A549 (cell line): ENCODE measurements at regions of chr12 and their contacts with region 1.

Region 1: DNA sequence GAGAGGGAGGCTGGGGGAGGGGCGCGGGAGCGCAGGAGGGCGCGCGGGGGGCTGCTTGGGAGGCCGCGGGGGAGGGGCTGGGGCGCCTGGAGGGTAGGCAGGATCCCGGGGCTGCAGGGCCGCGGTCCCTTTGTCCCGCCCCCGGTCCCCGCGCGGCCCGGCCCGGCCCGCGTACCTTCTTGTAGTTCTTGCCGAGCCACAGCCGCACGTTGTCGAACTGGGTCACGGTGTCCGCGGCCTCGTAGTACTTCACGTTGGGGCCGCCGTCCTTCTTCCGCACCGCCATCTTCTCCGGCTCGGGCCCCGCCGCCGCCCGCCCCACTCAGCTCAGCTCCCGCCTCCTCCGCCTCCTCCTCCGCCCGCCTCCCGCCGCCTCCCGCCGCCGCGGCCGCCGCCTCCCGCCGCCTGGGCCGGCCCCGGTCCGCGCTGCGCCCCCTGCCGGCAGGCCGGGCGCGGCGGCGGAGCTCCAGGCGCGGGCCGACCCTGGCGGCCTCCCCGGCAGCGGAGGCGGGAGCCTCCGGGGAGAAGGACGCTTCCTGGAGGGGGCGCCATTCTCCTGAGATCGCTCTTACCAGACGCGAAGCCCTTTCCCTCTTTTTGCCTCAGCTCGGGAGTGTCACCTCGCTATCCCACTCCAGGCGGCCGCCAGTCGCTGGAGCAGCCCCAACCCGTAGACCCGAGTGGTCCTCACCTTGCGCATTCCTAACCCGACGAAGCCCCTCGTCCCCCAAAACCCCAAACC is at the start of gene SMARCC2:
- DNase-seq: peak; percentile 91 to 92
- ATAC-seq: peak; percentile 83 to 91
- H3K4me3 ChIP-seq: peak within 1 kb of the TSS; percentile 81
- H3K27ac ChIP-seq: peak within 1 kb of the TSS; percentile 93 to 99
- H3K4me1 ChIP-seq: peaks cover 13% of the 10 kb centered on the region
- CTCF ChIP-seq: peak; percentile 99
- EP300 ChIP-seq: no peak
- POLR2A ChIP-seq: peak; percentile 63
- RAD21 ChIP-seq: peak; percentile 39 to 41; a peak in 3 of 5 replicates
- polyA plus RNA-seq, gene SMARCC2: 83.9 and 109 TPM in 2 replicates

Region 2: DNA sequence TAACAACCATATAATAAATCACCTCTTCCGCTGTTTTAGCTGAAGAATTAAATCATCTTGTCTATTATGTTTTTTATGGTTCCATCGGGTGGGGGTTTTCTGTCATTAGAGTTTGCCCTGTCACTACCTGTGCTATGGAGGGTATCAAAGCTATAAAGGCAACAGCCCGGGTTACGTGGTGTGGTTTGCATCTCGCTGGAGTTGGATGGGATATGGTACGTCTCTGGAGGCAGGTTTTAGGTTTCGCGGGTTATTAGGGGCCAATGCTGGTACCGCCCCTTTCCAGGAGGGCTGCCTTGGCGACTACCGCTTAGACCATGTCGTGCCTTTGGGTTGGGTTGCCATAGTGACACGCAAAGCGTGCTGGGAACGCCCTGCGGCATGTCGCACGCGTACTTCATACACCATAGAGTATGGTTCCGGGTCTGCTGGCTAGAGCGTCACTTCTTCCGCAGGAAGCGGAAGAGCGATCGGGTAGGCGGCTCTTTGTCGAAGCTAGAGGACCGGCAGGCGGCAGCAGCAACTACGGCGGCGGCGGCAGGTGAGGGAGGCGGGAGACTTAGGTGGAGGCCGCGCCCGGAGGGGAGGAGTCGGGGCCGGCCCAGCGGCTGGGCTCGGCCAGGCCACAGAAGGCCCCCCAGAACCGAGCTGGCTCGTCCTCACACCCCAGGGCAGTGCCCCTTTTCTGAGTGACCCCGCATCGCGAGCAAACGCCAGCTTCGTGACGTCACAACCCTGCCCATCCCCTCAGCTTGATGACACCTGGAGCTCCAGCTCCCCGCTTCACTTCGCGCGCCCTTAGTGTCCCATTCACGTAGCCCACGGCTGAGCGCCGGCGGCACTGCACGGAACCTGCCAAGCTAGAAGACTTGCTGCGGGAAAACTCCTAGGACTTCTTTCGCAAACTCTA is 71.3 kb before region 1 on chr12 and contains the start of gene ZC3H10:
- CTCF ChIA-PET with region 1: interaction called, 204 read pairs
- POLR2A ChIA-PET with region 1: interaction called, 36 read pairs
- DNase-seq: peak; percentile 97 to 100
- ATAC-seq: peak; percentile 74 to 82
- H3K4me3 ChIP-seq: peak within 1 kb of the TSS; percentile 71
- H3K27ac ChIP-seq: peak within 1 kb of the TSS; percentile 91 to 96
- H3K4me1 ChIP-seq: peaks cover 20% of the 10 kb centered on the region
- CTCF ChIP-seq: peak; percentile 36
- EP300 ChIP-seq: no peak
- POLR2A ChIP-seq: peak; percentile 96
- RAD21 ChIP-seq: 0 out of 5 replicates have a peak, but pooled peaks of 1 of the 2 experiments have one; percentile 10
- polyA plus RNA-seq, gene ZC3H10: 2.1 and 2.7 TPM in 2 replicates

Region 3: DNA sequence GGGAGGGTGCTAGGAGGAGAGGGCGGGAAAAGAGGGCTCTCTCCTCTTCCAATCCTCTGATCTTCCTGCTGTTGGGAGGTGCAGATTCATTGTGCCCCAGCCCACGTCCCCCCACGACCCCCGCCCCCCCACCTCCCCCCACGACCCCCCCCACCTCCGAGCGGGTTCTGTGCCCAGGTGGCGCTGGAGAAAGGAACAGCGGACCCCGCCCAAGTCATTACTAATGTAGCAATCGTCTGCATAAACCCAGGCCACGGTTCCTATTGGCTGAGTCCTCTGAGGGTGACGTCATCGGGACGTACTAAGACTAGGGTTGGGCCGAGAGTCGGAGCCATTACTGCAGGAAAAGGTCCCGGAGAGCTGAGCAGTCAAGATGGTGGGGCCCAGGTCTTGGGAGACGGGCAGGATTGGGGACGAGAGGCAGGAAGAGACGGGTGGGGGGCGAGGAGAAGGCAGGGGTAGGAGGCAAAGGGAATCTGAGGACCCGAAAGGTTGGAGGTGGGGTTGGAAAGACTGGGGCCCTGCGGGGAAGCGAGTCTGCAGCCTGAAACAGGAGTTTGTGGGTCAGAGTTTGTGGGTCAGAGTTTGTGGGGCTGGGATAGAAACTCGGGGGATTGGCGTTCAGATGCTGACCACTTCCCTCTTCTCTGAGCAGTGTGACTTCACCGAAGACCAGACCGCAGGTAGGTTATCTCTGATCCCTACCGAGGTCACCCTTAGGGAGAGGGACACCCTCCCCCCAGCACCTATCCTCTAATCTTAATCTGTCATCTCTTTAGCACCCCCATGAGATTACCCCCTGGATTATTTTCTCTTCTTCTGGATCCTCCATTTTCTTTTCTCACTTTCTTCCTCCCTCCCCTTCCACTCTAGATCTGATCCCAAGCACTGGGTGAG is 31.1 kb before region 1 on chr12 and contains the start of gene MYL6:
- CTCF ChIA-PET with region 1: interaction called, 83 read pairs
- POLR2A ChIA-PET with region 1: interaction called, 16 read pairs
- DNase-seq: peak; percentile 98 to 99
- ATAC-seq: peak; percentile 87 to 89
- H3K4me3 ChIP-seq: peak within 1 kb of the TSS; percentile 74
- H3K27ac ChIP-seq: peak within 1 kb of the TSS; percentile 90 to 97
- H3K4me1 ChIP-seq: peaks cover 39% of the 10 kb centered on the region
- CTCF ChIP-seq: no peak
- EP300 ChIP-seq: no peak
- POLR2A ChIP-seq: peak; percentile 99
- RAD21 ChIP-seq: no peak
- polyA plus RNA-seq, gene MYL6: 2,280 and 2,307 TPM in 2 replicates

Region 4: DNA sequence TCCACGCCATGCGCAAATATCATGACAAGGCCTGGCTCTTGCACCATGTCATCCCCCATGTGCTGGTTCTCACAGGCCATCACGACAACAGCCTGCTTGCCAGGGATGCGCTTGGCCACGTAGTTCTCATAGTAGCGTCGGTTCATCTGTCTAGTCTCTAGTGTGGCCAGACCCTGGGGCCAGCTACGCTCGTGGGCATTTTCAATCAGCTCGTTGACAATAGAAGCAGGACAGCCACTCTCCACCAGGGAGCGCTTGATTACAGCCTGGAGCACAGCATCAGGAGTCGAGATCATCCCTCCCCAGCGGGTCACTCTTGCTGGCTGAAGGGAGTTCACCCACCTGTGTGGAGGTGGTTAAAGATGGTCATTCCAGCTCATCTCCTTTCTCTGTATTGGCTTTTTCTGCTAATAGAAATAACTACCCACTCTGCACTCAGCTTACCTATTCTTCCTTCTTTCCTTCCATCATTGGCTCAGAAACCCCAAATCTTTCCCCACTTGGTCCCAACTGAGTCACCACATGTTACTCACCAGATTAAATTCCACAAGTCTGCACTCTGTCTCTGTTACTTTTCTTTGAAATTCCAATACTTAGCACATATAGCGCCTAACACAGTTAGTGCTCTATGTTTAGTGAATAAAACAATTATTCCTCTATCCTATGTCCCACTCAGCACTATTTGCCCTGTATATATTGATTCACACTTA is 17.3 kb after region 1 on chr12:
- CTCF ChIA-PET with region 1: interaction called, 77 read pairs
- POLR2A ChIA-PET with region 1: no interaction called
- DNase-seq: peak; percentile 72 to 74
- ATAC-seq: peak; percentile 94 to 96
- H3K4me3 ChIP-seq: no peak overlapping the region
- H3K27ac ChIP-seq: no peak overlapping the region
- H3K4me1 ChIP-seq: no peaks in the 10 kb centered on the region
- CTCF ChIP-seq: peak; percentile 61
- EP300 ChIP-seq: no peak
- POLR2A ChIP-seq: no peak
- RAD21 ChIP-seq: peak; percentile 45 to 68; a peak in 4 of 5 replicates

Region 5: GRCh38 chr12:56253091-56253490 is 63.7 kb after region 1 on chr12:
- CTCF ChIA-PET with region 1: interaction called, 37 read pairs
- POLR2A ChIA-PET with region 1: interaction called, 3 read pairs
- DNase-seq: no peak
- ATAC-seq: no peak
- H3K4me3 ChIP-seq: no peak overlapping the region
- H3K27ac ChIP-seq: no peak overlapping the region
- H3K4me1 ChIP-seq: peaks cover 15% of the 10 kb centered on the region
- CTCF ChIP-seq: no peak
- EP300 ChIP-seq: no peak
- POLR2A ChIP-seq: no peak
- RAD21 ChIP-seq: no peak

Region 6: GRCh38 chr12:56468216-56469006 is 279.1 kb after region 1 on chr12 and contains the start of gene SPRYD4:
- CTCF ChIA-PET with region 1: interaction called, 13 read pairs
- POLR2A ChIA-PET with region 1: interaction called, 4 read pairs
- DNase-seq: peak; percentile 92 to 96
- ATAC-seq: peak; percentile 94 to 96
- H3K4me3 ChIP-seq: peak within 1 kb of the TSS; percentile 90
- H3K27ac ChIP-seq: peak within 1 kb of the TSS; percentile 89 to 95
- H3K4me1 ChIP-seq: peaks cover 7% of the 10 kb centered on the region; the same call in 2 of the 3 replicates
- CTCF ChIP-seq: peak; percentile 55
- EP300 ChIP-seq: no peak
- POLR2A ChIP-seq: peak; percentile 92
- RAD21 ChIP-seq: 0 out of 5 replicates have a peak, but pooled peaks of 1 of the 2 experiments have one; percentile 19
- polyA plus RNA-seq, gene SPRYD4: 3.5 and 3.8 TPM in 2 replicates